ENCODE measurements at regions of chr10 and their contacts with region 1.

Region 1: DNA sequence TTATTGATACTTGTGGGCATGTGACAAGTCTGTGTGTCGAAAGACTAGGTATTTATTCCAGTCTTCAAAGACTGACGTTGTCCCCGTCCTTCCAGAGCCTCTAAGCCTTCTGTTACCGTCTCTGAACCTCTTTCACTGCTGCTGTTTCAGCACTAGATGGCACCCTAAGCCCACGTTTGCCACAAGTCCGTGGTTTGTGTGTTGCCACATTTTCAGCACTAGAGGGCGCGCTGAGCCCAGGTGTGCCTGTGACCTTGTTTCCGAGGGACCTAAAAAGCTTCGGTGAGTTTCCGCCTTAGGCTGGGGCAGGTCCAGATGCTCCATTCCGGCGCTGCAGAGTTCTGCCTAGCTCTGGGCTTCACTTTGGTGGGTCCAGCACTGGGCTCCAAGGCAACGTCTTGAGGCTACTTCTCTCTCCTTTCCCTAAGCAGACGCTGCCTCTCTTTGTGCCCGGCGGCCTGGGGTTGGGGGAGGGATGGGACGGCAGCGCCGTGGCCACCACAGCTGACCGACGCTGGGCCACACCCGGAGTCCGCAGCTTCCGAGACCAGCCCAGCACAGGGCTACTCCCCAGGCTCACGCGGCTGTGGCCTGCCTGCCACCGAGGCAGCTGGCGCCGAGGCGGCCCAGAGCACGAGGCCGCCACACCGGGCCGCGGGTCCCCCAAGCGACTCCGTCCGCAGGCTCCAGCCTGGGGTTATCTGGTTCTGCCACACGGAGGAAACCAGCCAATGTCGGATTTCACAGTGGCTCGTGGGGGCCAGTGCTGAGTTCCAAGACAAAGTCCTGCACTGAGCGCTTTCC is 520.2 kb downstream of the REEP3 start:
- DNase-seq: peak; percentile 94
- ATAC-seq: peak; percentile 85
- H3K4me3 ChIP-seq: peak overlapping the region; percentile 56
- H3K27ac ChIP-seq: no peak overlapping the region
- H3K4me1 ChIP-seq: no peaks in the 10 kb centered on the region
- H3K27me3 ChIP-seq: no peaks in the 10 kb centered on the region
- CTCF ChIP-seq: peak; percentile 100

Region 2: GRCh38 chr10:62244780-62245467 is 1796.5 kb before region 1 on chr10:
- CTCF ChIA-PET with region 1: no interaction called
- POLR2A ChIA-PET with region 1: no interaction called
- intact Hi-C with region 1: no loop called
- DNase-seq: peak; percentile 99
- ATAC-seq: peak; percentile 42
- H3K4me3 ChIP-seq: no peak overlapping the region
- H3K27ac ChIP-seq: peak overlapping the region; percentile 3
- H3K4me1 ChIP-seq: peaks cover 60% of the 10 kb centered on the region
- H3K27me3 ChIP-seq: no peaks in the 10 kb centered on the region
- CTCF ChIP-seq: peak; percentile 100

Region 3: DNA sequence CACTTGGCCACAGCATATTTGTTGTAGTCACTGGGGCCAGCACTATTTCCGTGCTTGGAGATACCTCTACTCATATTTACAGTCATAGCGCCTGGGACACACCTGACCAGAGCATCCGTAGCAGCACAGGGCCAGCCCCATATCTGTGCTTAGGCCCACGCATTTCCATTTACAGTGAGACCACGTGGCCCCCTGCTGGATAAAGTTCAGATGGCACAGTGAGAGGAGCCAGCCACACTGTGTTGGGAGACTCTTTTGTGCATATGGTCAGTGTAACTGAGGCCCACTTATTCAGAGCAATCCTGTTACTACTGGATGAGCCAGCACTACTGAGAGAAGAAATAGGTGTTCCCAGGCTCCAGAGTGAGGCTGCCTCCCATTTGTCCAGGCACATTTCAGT is 64.8 kb before region 1 on chr10:
- CTCF ChIA-PET with region 1: interaction called, 4 read pairs
- POLR2A ChIA-PET with region 1: no interaction called
- intact Hi-C with region 1: loop called (anchors 2 kb)
- DNase-seq: peak; percentile 74
- ATAC-seq: peak; percentile 97
- H3K4me3 ChIP-seq: no peak overlapping the region
- H3K27ac ChIP-seq: no peak overlapping the region
- H3K4me1 ChIP-seq: no peaks in the 10 kb centered on the region
- H3K27me3 ChIP-seq: no peaks in the 10 kb centered on the region
- CTCF ChIP-seq: peak; percentile 91

Region 4: GRCh38 chr10:64096941-64097340 is 55.6 kb after region 1 on chr10:
- CTCF ChIA-PET with region 1: no interaction called
- POLR2A ChIA-PET with region 1: no interaction called
- intact Hi-C with region 1: no loop called
- DNase-seq: peak; percentile 74
- ATAC-seq: no peak
- H3K4me3 ChIP-seq: no peak overlapping the region
- H3K27ac ChIP-seq: no peak overlapping the region
- H3K4me1 ChIP-seq: peaks cover 29% of the 10 kb centered on the region
- H3K27me3 ChIP-seq: no peaks in the 10 kb centered on the region
- CTCF ChIP-seq: no peak

Region 5: DNA sequence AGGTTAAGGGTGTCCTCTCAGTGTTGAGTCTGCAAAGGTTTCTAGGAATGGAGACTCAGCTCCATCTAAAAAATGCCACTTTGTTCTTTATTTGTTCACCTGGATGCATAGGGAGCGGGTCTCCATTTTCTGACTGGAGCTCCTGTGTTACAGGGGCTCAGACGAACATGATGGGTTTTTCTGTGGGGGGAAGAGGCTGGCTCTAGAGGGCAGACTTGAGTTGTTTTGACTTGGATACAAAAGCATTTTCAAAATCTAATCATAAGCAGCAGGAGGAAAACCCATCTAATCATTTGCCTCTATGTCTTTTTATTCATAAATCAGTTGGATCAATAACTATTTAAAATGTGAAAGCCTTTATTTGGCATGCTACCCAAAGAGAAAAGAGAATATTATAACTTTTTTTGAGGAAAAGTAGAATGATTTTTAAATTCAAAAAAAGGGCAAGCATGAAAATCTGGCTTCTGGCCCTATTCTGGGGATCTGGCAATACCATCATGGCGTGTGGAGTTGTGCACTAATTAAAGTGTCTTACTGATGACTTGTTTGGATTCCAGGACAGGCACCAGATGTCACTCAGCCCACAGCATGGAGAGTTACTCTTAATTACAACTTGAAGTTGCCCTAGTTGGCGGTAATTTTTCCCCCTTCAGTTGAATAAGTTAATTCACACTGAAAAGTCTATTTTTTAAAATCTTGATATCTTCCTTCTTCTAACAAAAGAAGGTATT is 74.7 kb after region 1 on chr10:
- CTCF ChIA-PET with region 1: no interaction called
- POLR2A ChIA-PET with region 1: no interaction called
- intact Hi-C with region 1: loop called (anchors 1 kb)
- DNase-seq: peak; percentile 54
- ATAC-seq: peak; percentile 29; the same call in 1 of the 2 replicates
- H3K4me3 ChIP-seq: no peak overlapping the region; the same call in 1 of the 2 replicates
- H3K27ac ChIP-seq: peak overlapping the region; percentile 71
- H3K4me1 ChIP-seq: peaks cover 40% of the 10 kb centered on the region
- H3K27me3 ChIP-seq: no peaks in the 10 kb centered on the region
- CTCF ChIP-seq: peak; percentile 84

Region 6: GRCh38 chr10:64379898-64380297 is 338.5 kb after region 1 on chr10:
- CTCF ChIA-PET with region 1: interaction called, 5 read pairs
- POLR2A ChIA-PET with region 1: interaction called, 4 read pairs
- intact Hi-C with region 1: loop called (anchors 2 kb)
- DNase-seq: peak; percentile 75
- ATAC-seq: peak; percentile 90
- H3K4me3 ChIP-seq: no peak overlapping the region
- H3K27ac ChIP-seq: no peak overlapping the region
- H3K4me1 ChIP-seq: no peaks in the 10 kb centered on the region
- H3K27me3 ChIP-seq: no peaks in the 10 kb centered on the region
- CTCF ChIP-seq: peak; percentile 81

Measured in PC-3 (cell line).